Common myeloid progenitor, CD34-positive (primary cell): ENCODE measurements at regions of chr12 and their contacts with region 1.

Region 1: GRCh38 chr12:120132863-120133385 is 16.4 kb upstream of the RAB35 start:
- DNase-seq: no peak
- H3K4me3 ChIP-seq: no peak overlapping the region
- H3K27ac ChIP-seq: no peak overlapping the region
- H3K4me1 ChIP-seq: no peaks in the 10 kb centered on the region
- H3K27me3 ChIP-seq: no peaks in the 10 kb centered on the region

Region 2: DNA sequence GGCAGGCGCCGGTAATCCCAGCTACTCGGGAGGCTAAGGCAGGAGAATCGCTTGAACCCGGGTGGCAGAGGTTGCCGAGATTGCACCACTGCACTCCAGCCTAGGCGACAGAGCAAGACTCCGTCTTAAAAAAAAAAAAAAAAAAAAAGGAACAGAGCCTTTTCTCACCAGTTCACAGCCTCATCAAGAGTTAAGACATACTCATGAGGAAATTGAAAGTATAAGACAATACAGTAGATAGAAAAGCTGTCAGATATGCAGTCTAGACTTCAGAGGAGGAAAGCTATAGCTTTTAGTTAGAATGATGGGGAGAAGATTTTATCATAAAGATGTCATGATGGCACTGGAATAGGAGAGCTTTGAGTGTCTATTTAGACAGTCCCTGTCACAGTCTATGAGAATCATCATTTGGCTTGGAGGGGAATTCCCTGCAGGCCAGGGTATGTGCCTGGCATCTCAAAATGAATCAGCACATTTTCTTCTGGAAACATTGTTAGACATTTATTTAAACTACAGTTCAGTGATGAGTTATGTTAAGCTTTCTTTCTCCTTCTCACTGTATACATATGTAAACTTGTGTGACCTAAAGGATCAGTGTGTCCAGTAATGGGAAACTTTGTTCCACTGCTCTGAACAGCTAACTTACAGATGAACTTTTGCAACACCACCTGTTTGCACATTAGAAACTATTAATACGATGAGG is 13.5 kb before region 1 on chr12:
- CTCF ChIA-PET with region 1: interaction called, 15 read pairs
- POLR2A ChIA-PET with region 1: no interaction called
- DNase-seq: peak in 2 of 3 donors; percentile 52 to 54
- H3K4me3 ChIP-seq: no peak overlapping the region
- H3K27ac ChIP-seq: no peak overlapping the region
- H3K4me1 ChIP-seq: peaks cover 12 to 59% (median 27%) of the 10 kb centered on the region in 4 experiments
- H3K27me3 ChIP-seq: no peaks in the 10 kb centered on the region